Colonic mucosa (tissue), 4 donors: ENCODE measurements at regions of chr12 and their contacts with region 1.

Region 1: DNA sequence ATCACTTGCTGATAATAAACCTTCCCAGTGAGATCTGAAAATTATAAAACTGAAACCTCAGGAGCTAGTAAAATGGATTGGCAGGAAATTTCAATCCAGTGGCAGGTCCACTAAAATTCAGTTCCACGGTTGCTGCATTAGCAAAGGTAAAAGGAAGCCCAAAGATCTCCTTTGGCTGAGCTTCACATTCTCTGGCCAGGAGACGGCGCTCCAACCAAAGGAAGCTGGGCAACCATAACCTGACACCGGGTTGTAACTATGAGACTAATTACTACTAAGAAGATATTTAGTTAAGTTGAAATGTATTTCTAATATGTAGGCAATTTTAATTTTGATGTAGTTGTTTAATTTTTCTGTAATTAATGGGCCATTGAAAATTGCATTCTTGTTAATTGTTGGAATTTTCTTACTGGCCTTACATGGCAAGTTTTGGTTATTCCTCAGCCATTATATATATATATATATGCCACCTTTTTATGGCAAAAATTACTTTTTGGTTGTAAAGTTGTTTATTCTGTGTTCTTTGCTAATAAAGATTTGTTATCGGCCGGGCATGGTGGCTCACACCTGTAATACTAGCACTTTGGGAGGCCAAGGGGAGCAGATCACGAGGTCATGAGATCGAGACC is 17.0 kb downstream of the OR8S1 start:
- DNase-seq: peak; percentile 53
- H3K4me3 ChIP-seq: no peak overlapping the region
- H3K27ac ChIP-seq: no peak overlapping the region
- H3K4me1 ChIP-seq: no peaks in the 10 kb centered on the region
- H3K27me3 ChIP-seq: no peaks in the 10 kb centered on the region
- CTCF ChIP-seq: peak; percentile 46

Region 2: DNA sequence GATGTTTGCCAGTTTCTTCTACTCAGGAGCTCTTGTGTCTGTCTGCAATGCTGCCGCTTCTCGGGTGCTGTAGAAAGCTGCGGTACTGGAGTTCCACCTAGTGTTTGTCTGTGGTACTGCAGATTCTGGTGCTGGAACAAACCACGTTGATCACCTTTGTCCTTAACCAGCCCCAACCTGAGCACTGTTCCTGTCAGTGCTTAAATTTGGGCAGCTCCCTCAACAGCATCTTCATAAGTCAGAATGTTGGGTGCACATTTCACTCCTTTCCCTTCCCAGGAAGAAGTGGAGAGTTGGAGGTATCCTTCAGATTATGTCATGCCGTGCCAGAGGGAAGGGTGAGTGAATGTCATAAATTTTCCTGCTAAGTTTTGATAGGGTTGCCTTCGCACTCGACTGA is 76.1 kb after region 1 on chr12:
- intact Hi-C with region 1: loop called (anchors 2 kb)
- DNase-seq: peak; percentile 78
- H3K4me3 ChIP-seq: no peak overlapping the region
- H3K27ac ChIP-seq: no peak overlapping the region
- H3K4me1 ChIP-seq: no peaks in the 10 kb centered on the region
- H3K27me3 ChIP-seq: no peaks in the 10 kb centered on the region
- CTCF ChIP-seq: peak; percentile 94

Region 3: GRCh38 chr12:48671231-48671856 is 128.9 kb after region 1 on chr12:
- intact Hi-C with region 1: no loop called
- DNase-seq: no peak
- H3K4me3 ChIP-seq: no peak overlapping the region
- H3K27ac ChIP-seq: no peak overlapping the region
- H3K4me1 ChIP-seq: no peaks in the 10 kb centered on the region
- H3K27me3 ChIP-seq: no peaks in the 10 kb centered on the region
- CTCF ChIP-seq: no peak

Region 4: GRCh38 chr12:48873096-48873495 is 330.7 kb after region 1 on chr12:
- intact Hi-C with region 1: no loop called
- DNase-seq: no peak
- H3K4me3 ChIP-seq: no peak overlapping the region
- H3K27ac ChIP-seq: no peak overlapping the region
- H3K4me1 ChIP-seq: no peaks in the 10 kb centered on the region
- H3K27me3 ChIP-seq: no peaks in the 10 kb centered on the region
- CTCF ChIP-seq: no peak